RWPE1 (cell line): ENCODE measurements at regions of chr19 and their contacts with region 1.

Region 1: GRCh38 chr19:47467914-47468313 is 3.8 kb downstream of the SLC8A2 start:
- DNase-seq: no peak
- H3K27ac ChIP-seq: no peak overlapping the region
- CTCF ChIP-seq: no peak

Region 2: GRCh38 chr19:47428177-47428894 is 39.6 kb before region 1 on chr19:
- CTCF ChIA-PET with region 1: no interaction called
- POLR2A ChIA-PET with region 1: no interaction called
- DNase-seq: peak; percentile 96
- H3K27ac ChIP-seq: peak overlapping the region; percentile 70
- CTCF ChIP-seq: no peak

Region 3: GRCh38 chr19:47697863-47698609 is 230.1 kb after region 1 on chr19:
- CTCF ChIA-PET with region 1: interaction called, 12 read pairs
- POLR2A ChIA-PET with region 1: no interaction called
- DNase-seq: peak; percentile 76
- H3K27ac ChIP-seq: peak overlapping the region; percentile 64
- CTCF ChIP-seq: peak; percentile 96